ENCODE measurements at regions of chr4 and their contacts with region 1.

Region 1: GRCh38 chr4:2220016-2220630 is 21.8 kb downstream of the HAUS3 start:
- DNase-seq: peak; percentile 54 to 78 (median 59)
- ATAC-seq: peak; percentile 70 to 92 (median 88)
- H3K4me3 ChIP-seq: no peak overlapping the region
- H3K27ac ChIP-seq: no peak overlapping the region
- H3K4me1 ChIP-seq: peaks cover 0 to 8% (median 0%) of the 10 kb centered on the region in 12 donors
- H3K27me3 ChIP-seq: no peaks in the 10 kb centered on the region
- CTCF ChIP-seq: peak; percentile 72 to 87 (median 84)
- POLR2A ChIP-seq: no peak

Region 2: GRCh38 chr4:2281575-2282343 is 61.6 kb after region 1 on chr4:
- intact Hi-C with region 1: no loop called
- DNase-seq: peak in 3 of 5 donors; percentile 15 to 65 (median 19)
- ATAC-seq: peak in 1 of 4 donors; percentile 30
- H3K4me3 ChIP-seq: no peak overlapping the region
- H3K27ac ChIP-seq: peak overlapping the region in 1 of 12 donors; percentile 79
- H3K4me1 ChIP-seq: no peaks in the 10 kb centered on the region
- H3K27me3 ChIP-seq: no peaks in the 10 kb centered on the region
- CTCF ChIP-seq: no peak
- POLR2A ChIP-seq: no peak

Region 3: DNA sequence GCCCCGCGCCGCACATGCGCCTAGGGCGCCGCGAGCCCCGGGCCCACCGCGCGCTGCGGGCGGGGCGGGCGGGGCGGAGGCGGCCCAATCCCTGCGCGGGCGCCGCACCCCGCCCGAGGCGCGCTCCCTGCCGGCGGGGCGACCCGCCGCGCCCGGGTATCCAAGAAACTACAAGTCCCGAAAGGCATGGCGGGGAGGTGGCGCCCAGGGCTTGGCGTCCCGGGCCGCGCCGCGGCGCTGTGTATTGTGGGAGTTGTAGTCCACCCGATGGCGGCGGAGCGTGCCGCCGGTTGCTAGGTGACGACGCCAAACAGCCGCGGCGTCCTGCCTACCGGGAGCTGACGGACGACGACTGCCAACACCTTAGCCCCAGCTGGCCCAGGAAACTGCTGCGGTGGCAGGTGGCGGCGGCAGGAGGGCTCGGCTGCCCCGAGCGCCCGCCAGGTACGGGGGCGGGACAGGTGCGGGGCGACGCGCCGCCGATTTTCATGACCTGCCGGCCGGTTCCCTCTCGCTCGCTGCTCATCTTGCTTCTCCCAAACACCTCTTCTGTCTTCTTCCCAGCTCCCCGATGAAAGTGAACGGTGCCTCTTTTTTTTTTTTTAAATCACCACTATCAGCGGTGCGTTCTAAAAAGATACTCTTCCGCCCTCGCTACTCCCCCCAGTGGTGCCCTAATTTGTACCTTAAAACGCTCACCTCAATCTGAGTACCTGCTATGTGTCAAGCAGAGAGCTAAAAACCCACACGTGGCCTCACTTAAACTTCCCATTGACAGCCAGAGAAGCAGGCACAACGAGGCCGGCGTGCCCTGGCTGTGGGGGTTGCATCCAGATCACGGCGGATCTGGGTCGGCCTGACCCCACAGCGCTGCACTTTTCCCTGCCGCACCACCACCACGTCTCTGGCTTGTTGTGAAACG is 198.8 kb after region 1 on chr4 and contains the start of gene CFAP99:
- intact Hi-C with region 1: loop called in 1 of 10 experiments (anchors 5 kb)
- DNase-seq: peak; percentile 97 to 99 (median 98)
- ATAC-seq: peak; percentile 95 to 98 (median 96)
- H3K4me3 ChIP-seq: peak within 1 kb of the TSS; percentile 48 to 84 (median 70)
- H3K27ac ChIP-seq: peak within 1 kb of the TSS in 7 of 12 donors; percentile 15 to 39 (median 24)
- H3K4me1 ChIP-seq: peaks cover 5 to 42% (median 22%) of the 10 kb centered on the region in 12 donors
- H3K27me3 ChIP-seq: peaks cover 0 to 41% (median 16%) of the 10 kb centered on the region in 9 donors
- CTCF ChIP-seq: peak in 7 of 12 donors; percentile 6 to 45 (median 23)
- POLR2A ChIP-seq: peak in 1 of 2 donors; percentile 3
- total RNA-seq, gene CFAP99: not detected

Region 4: DNA sequence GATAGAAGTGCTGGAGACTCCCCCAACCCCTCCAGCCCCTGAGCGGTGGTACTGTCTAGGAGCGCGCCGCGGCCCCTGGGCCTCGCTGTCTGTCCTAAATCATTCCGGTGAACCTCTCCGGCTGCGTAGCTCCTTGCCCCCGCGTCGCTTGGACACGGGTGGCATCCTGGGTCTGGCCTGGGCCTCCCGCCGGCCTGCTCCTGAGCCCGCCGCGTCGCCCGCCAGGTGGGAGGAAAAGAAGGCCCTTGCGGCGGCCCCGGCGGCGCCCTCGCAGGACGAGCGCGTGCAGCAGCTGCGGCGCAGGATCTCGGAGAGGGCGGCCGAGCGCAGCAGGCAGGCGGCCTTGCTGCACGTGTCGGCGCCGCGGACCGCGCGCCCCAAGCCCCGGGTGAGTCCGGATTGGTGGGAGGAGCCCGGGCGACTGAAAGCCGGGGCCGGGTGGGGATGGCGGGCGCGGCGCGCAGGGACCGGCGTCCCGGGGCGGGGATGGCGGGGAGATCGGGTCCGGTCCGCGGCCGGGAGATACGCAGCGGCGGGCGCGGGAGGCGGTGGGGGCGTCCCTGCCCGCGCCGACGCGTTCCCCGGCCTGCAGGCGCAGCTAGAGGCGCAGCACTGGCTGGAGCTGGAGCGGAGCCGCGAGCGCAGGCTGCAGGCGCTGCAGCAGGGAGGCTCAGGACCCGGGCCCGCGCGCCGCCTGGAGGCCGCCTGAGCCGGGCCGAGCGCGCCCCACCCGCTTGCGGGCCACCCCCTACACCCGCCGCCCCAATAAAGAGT is 242.3 kb after region 1 on chr4:
- intact Hi-C with region 1: loop called in 7 of 10 experiments (anchors 2 to 10 kb)
- DNase-seq: peak; percentile 67 to 84 (median 73)
- ATAC-seq: peak; percentile 68 to 96 (median 90)
- H3K4me3 ChIP-seq: peak overlapping the region; percentile 35 to 80 (median 60)
- H3K27ac ChIP-seq: peak overlapping the region in 9 of 12 donors; percentile 6 to 78 (median 62)
- H3K4me1 ChIP-seq: peaks cover 0 to 18% (median 11%) of the 10 kb centered on the region in 12 donors
- H3K27me3 ChIP-seq: peaks cover 0 to 12% (median 0%) of the 10 kb centered on the region in 9 donors
- CTCF ChIP-seq: peak in 11 of 12 donors; percentile 33 to 79 (median 66)
- POLR2A ChIP-seq: no peak

Region 5: GRCh38 chr4:2630556-2631273 is 410.6 kb after region 1 on chr4:
- intact Hi-C with region 1: loop called in 3 of 10 experiments (anchors 10 kb)
- DNase-seq: no peak
- ATAC-seq: peak in 1 of 4 donors; percentile 26
- H3K4me3 ChIP-seq: no peak overlapping the region
- H3K27ac ChIP-seq: no peak overlapping the region
- H3K4me1 ChIP-seq: peaks cover 0 to 22% (median 9%) of the 10 kb centered on the region in 12 donors
- H3K27me3 ChIP-seq: no peaks in the 10 kb centered on the region
- CTCF ChIP-seq: no peak
- POLR2A ChIP-seq: no peak